ENCODE measurements at regions of chr3 and their contacts with region 1.

Region 1: DNA sequence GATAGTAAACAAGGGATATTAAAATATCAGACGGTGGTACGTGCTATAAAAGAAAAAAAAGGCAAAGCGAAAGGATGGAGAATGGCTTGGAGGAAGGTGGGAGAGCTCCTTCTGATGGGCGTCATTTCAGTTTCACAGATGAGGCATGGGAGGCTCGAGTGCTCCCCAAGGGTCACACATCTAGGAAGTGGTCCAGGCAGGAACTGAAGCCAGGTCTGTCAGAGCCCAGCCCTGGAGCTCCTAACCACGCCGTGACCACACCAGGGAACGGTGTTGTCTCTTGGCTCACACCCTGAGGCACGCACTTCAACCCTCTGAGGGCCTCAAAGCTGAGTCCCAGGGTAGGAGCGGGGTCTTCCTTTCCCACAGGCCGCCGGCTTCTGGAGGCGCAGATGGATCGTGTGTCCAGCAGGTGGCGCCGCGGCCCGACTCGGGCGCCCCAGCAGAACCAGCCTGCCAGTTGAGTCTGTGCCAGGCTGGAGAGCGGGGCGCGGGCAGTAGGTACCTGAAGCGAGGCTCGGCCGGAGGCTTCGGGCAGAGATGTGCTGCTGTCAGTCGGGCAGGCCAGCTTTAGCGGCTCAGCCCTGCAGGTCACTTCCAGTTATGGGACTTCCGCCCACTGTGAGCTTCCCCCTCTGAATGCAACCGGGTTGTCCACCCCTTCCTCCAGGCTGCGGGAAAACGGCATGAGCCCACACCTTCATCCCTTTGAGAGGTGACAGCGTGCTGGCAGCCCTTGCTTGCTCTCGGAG is 68.1 kb downstream of the SLC6A1 start:
- DNase-seq: peak; percentile 71 to 75
- ATAC-seq: peak; percentile 87 to 93
- H3K4me3 ChIP-seq: peak overlapping the region; percentile 42
- H3K27ac ChIP-seq: peak overlapping the region; percentile 45 to 78
- H3K4me1 ChIP-seq: peaks cover 8% of the 10 kb centered on the region; the same call in 1 of the 3 replicates
- CTCF ChIP-seq: peak; percentile 94
- EP300 ChIP-seq: no peak
- POLR2A ChIP-seq: no peak
- RAD21 ChIP-seq: peak; percentile 79 to 90

Region 2: GRCh38 chr3:10583798-10584705 is 476.6 kb before region 1 on chr3:
- CTCF ChIA-PET with region 1: no interaction called
- POLR2A ChIA-PET with region 1: no interaction called
- DNase-seq: no peak
- ATAC-seq: peak in 1 of 2 experiments; percentile 52; a peak in 3 of 6 replicates
- H3K4me3 ChIP-seq: no peak overlapping the region
- H3K27ac ChIP-seq: no peak overlapping the region
- H3K4me1 ChIP-seq: no peaks in the 10 kb centered on the region
- CTCF ChIP-seq: no peak
- EP300 ChIP-seq: no peak
- POLR2A ChIP-seq: no peak
- RAD21 ChIP-seq: no peak

Region 3: GRCh38 chr3:10748040-10748439 is 312.6 kb before region 1 on chr3:
- CTCF ChIA-PET with region 1: interaction called, 297 read pairs
- POLR2A ChIA-PET with region 1: no interaction called
- DNase-seq: no peak
- ATAC-seq: no peak
- H3K4me3 ChIP-seq: no peak overlapping the region
- H3K27ac ChIP-seq: no peak overlapping the region
- H3K4me1 ChIP-seq: no peaks in the 10 kb centered on the region
- CTCF ChIP-seq: no peak
- EP300 ChIP-seq: no peak
- POLR2A ChIP-seq: no peak
- RAD21 ChIP-seq: no peak

Region 4: DNA sequence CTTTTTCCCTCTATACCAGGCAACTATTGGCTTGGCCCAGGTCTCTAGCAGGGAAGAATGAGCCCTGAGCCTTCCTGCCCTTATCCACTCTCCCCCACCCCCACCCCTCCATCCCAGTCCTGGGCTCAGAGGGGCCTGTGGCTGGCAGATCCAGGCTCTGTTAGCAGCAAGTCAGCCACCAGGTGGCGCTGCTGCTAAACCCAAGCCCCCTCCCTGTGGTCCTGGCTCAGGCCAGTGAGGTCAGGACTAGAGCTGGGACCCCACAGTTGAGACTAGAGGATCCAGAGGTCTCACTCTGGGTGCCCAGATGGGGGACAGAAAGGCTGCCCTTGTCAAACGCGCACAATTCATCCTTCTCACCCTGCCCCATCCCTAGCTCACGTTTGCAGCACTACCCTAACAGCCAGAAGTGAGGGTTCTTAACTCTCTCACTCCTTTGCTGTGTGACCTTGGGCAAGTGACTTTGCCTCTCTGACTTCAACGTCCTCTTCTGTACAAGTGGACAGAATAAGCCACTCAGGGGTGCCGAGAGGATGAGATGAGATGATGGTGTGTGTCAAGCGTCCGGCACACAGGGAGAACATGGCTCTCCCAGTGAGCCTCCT is 114.9 kb before region 1 on chr3:
- CTCF ChIA-PET with region 1: interaction called, 164 read pairs
- POLR2A ChIA-PET with region 1: no interaction called
- DNase-seq: peak; percentile 53 to 75
- ATAC-seq: peak; percentile 81 to 96
- H3K4me3 ChIP-seq: no peak overlapping the region
- H3K27ac ChIP-seq: no peak overlapping the region
- H3K4me1 ChIP-seq: no peaks in the 10 kb centered on the region
- CTCF ChIP-seq: peak; percentile 65
- EP300 ChIP-seq: no peak
- POLR2A ChIP-seq: no peak
- RAD21 ChIP-seq: peak; percentile 63 to 74

Region 5: DNA sequence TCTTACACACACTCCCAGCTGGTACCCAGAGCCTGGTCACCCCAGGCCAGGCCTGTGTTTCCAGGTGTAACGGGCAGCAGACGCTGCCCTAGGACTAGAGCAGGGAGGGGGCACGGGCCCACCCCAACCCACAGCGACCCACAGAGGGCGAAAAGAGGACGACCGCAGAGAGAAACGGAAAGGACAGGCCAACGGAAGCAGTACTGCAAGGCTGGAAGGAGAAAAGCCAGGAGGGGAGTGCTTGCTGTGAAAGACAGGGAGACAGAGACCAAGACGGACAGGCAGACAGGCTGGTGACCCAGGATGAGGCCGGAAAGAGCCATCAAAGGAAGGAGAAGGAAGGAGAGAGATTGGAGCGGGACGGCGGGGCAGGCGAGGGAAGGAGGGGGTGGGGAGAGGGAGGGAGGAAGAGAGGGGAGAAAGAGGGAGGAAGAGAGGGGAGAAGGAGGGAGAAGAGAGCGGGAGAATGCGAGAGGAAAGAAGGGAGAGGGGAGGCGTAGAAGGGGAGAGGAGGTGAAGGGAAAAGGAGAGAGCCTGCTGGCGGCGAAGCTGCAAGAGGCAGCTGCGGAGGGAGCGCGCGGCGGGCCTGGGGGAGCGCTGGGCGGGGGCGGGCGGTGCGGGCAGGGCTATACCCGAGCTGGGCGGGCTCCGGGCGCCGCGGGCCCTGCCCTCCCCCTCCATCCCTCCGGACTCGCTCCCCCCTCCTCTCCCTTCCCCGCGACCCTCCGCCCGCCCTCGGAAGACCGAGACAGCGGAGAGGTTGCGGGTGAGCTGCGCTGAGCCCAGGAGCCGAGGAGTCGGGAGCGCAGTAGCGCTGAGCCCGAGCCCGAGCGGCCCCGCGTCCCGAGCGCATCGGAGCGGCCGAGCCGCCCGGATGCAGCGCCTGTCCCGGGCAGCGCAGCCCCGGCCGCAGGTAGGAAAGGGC is 68.4 kb before region 1 on chr3 and contains the start of gene SLC6A1:
- CTCF ChIA-PET with region 1: interaction called, 11 read pairs
- POLR2A ChIA-PET with region 1: no interaction called
- DNase-seq: peak in 1 of 2 experiments; percentile 22
- ATAC-seq: peak; percentile 70 to 75
- H3K4me3 ChIP-seq: peak within 1 kb of the TSS; percentile 47
- H3K27ac ChIP-seq: peak within 1 kb of the TSS in 1 of 2 experiments; percentile 51; a peak in 1 of 6 replicates
- H3K4me1 ChIP-seq: peaks cover 5% of the 10 kb centered on the region; the same call in 1 of the 3 replicates
- CTCF ChIP-seq: 0 out of 3 replicates have a peak, but pooled peaks have one; percentile 9
- EP300 ChIP-seq: no peak
- POLR2A ChIP-seq: no peak
- RAD21 ChIP-seq: no peak
- polyA plus RNA-seq, gene SLC6A1: 0.03 TPM in 1 of 2 replicates, not detected in the other

Region 6: GRCh38 chr3:11077466-11077865 is 16.8 kb after region 1 on chr3:
- CTCF ChIA-PET with region 1: interaction called, 43 read pairs
- POLR2A ChIA-PET with region 1: no interaction called
- DNase-seq: peak in 1 of 2 experiments; percentile 32
- ATAC-seq: peak in 1 of 2 experiments; percentile 74; a peak in 2 of 6 replicates
- H3K4me3 ChIP-seq: no peak overlapping the region
- H3K27ac ChIP-seq: no peak overlapping the region
- H3K4me1 ChIP-seq: peaks cover 9% of the 10 kb centered on the region
- CTCF ChIP-seq: no peak
- EP300 ChIP-seq: no peak
- POLR2A ChIP-seq: no peak
- RAD21 ChIP-seq: no peak

Region 7: DNA sequence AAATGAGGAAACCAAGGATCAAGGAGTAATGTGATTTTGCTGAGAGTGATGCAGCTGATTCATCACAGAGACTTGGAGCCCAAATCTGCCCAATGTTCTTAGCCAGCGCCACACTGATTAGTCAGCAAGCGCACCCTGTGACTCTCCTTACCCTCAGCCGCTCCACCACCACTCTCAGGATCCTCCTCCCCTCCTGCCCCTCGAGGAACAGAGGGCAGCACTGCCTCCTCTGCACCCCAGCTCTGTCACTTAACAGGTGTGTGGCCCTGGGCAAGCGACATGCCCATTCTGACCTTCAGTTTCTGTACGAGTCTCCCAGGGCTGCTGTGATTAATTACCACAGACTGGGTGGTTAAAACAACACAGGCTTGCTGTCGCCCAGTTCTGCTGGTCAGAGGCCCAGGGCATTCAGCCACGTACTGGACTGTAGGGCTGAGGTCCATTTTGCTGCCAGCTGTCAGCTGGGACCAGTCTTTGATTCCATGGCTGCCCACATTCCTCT is 57.6 kb after region 1 on chr3:
- CTCF ChIA-PET with region 1: interaction called, 18 read pairs
- POLR2A ChIA-PET with region 1: no interaction called
- DNase-seq: no peak
- ATAC-seq: no peak
- H3K4me3 ChIP-seq: no peak overlapping the region
- H3K27ac ChIP-seq: no peak overlapping the region
- H3K4me1 ChIP-seq: no peaks in the 10 kb centered on the region
- CTCF ChIP-seq: no peak
- EP300 ChIP-seq: no peak
- POLR2A ChIP-seq: no peak
- RAD21 ChIP-seq: no peak

Region 8: DNA sequence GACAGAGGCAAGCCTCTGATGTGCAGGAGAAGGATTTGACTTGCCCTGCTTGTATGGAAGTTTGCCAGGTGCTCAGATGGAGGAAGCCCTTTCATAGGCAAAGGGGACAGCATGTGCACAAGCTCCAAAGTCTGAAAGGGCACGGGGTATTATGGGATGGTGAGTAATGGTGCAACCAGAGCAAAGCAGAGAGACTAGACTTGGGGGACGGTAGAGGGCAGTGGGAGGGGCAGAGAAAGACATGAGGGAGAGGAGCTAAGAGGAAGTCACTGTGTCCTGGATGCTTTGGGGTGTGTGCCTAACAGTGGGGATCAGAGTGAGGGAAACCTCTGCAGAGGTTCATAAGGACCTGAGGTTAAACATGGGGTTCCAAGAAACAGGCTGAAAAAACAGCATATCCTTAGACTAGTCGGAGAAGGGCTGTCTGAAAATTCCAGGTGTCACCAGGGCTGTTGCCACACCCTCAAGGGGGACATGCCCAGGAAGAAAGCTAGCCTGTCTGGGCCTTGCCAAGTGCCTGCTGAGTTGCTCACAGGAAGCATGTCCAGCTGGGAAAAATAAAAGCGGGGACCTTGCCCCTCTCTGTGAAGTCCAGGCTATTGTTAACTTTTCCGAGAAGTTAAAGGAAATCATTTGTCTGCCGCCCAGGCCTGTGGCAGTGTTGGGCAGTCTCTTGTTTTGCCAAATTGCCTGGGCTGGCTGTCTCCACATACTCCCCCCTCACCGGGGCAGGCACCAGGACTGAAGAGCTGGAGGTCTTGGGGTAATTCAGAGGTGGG is 140.8 kb after region 1 on chr3:
- CTCF ChIA-PET with region 1: interaction called, 20 read pairs
- POLR2A ChIA-PET with region 1: no interaction called
- DNase-seq: peak in 1 of 2 experiments; percentile 44
- ATAC-seq: peak in 1 of 2 experiments; percentile 30; a peak in 2 of 6 replicates
- H3K4me3 ChIP-seq: no peak overlapping the region
- H3K27ac ChIP-seq: peak overlapping the region in 1 of 2 experiments; percentile 61; a peak in 3 of 6 replicates
- H3K4me1 ChIP-seq: peaks cover 17% of the 10 kb centered on the region
- CTCF ChIP-seq: no peak
- EP300 ChIP-seq: no peak
- POLR2A ChIP-seq: no peak
- RAD21 ChIP-seq: no peak

Measured in A549 (cell line).